ENCODE measurements at regions of chr2 and their contacts with region 1.

Region 1: DNA sequence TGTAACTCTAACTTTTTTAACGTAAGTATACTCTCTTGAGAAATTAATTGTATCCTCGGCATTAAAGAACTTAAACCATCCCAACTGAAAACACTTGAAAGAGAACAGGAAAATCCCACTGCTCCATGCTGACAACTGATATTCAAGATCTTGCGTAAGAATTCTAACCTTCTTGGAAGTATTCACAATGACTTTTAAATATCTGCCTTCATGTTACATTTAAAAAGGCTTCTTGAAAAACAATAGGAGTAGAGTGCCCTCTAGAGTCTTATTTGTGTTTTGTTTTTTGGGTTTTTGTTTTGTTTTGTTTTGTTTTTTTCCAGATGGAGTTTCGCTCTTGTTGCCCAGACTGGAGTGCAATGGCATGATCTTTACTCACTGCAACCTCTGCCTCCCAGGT is 65.4 kb upstream of the DNAJC10 start:
- DNase-seq: peak; percentile 30
- ATAC-seq: no peak
- H3K4me3 ChIP-seq: no peak overlapping the region
- H3K27ac ChIP-seq: no peak overlapping the region
- H3K4me1 ChIP-seq: no peaks in the 10 kb centered on the region
- H3K27me3 ChIP-seq: no peaks in the 10 kb centered on the region
- CTCF ChIP-seq: peak; percentile 65; the same call in 1 of the 2 replicates

Region 2: DNA sequence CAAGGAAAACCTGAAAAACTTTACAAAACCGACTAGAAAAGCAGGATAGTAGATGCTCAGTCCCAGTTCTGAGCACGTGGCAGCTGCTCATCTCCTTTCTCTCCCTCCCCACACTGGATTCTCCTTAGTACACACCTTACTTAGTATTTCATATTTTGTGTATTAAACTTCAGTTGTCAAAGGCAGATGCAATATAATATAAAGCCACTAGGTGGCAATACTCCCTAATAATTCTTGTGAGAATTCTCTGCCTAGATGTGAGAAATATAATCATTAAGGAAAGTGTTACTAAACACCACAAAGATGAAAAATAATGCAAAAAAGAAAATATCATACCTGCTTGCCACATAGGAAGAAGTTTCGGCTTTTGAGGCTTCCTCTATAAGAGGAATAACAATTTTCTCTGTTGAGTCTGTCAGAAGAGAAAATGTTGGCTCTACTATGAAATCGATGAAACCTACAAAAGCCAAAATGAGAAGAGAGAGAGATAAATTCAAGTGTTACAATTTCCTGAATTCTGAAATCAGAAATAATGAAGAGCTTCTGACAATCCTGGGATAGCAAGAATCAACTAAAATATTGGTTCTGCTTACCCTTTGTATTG is 464.5 kb before region 1 on chr2:
- CTCF ChIA-PET with region 1: interaction called, 4 read pairs
- POLR2A ChIA-PET with region 1: no interaction called
- in situ Hi-C with region 1: no loop called
- intact Hi-C with region 1: loop called (anchors 1 kb)
- DNase-seq: peak; percentile 17
- ATAC-seq: peak; percentile 68; the same call in 1 of the 2 replicates
- H3K4me3 ChIP-seq: no peak overlapping the region
- H3K27ac ChIP-seq: no peak overlapping the region
- H3K4me1 ChIP-seq: no peaks in the 10 kb centered on the region
- H3K27me3 ChIP-seq: no peaks in the 10 kb centered on the region
- CTCF ChIP-seq: peak; percentile 72; the same call in 1 of the 2 replicates

Region 3: DNA sequence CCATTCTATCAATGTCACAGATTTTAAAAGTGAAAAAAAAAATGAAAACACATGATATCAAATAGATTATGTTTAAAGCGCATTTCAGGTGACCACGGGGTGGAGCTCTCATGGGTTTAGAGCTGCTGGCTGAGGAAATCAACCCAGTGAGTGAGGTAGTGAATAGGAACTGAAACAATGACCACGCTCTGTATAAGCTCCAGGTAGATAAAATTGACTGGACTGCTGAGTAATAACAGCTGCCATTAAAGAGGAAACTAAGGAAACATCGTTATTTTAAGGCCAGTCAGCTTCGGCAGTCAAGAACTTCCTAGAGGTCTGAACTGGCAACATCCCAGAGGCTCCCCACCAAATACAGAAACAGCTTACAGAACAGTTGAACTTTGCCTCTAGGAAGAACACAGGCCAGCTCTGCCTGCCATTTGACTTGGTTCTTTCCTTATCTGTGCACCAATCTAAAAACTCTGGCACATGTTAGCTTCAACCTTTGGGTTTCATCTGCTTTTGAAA is 409.8 kb before region 1 on chr2:
- CTCF ChIA-PET with region 1: no interaction called
- POLR2A ChIA-PET with region 1: no interaction called
- in situ Hi-C with region 1: no loop called
- intact Hi-C with region 1: loop called (anchors 5 kb)
- DNase-seq: no peak
- ATAC-seq: no peak; the same call in 1 of the 2 replicates
- H3K4me3 ChIP-seq: no peak overlapping the region
- H3K27ac ChIP-seq: no peak overlapping the region
- H3K4me1 ChIP-seq: no peaks in the 10 kb centered on the region
- H3K27me3 ChIP-seq: no peaks in the 10 kb centered on the region
- CTCF ChIP-seq: peak; percentile 61